HepG2 (cell line): ENCODE measurements at regions of chr7 and their contacts with region 1.

Region 1: GRCh38 chr7:18064242-18064838 is 36.7 kb upstream of the PRPS1L1 start:
- DNase-seq: peak; percentile 15
- ATAC-seq: peak; percentile 66
- H3K4me3 ChIP-seq: no peak overlapping the region
- H3K27ac ChIP-seq: no peak overlapping the region
- H3K4me1 ChIP-seq: no peaks in the 10 kb centered on the region
- H3K27me3 ChIP-seq: no peaks in the 10 kb centered on the region
- CTCF ChIP-seq: peak; percentile 52
- EP300 ChIP-seq: no peak
- POLR2A ChIP-seq: no peak
- RAD21 ChIP-seq: no peak

Region 2: DNA sequence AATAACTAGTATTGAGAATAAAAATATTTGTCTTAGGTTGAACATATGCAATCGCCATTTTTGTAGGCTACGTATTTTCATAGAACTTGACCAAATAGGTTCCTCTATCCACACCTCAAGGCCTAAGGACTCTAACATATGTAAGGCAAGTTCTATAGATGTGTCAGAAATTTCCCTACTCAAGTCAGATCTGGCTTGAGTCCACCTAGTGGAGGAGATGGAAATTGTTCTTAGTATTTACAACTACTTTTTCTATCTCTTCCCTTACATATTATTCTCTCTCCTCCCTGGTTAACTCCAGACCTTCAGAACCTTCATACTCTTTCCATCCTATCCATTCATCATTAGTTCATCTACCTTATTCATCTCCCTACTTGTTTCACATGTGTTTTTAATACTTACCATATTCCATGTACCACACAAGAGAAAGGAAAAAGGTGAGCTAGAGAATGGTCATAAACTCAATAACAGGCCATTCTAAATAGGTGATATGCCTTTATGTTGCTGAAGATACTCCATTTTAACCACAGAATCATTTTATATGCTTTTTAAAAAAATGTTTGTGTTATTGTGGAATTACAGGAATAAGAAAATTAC is 256.7 kb after region 1 on chr7:
- CTCF ChIA-PET with region 1: no interaction called
- POLR2A ChIA-PET with region 1: no interaction called
- in situ Hi-C with region 1: no loop called
- intact Hi-C with region 1: loop called (anchors 10 kb)
- DNase-seq: peak; percentile 23
- ATAC-seq: peak; percentile 68
- H3K4me3 ChIP-seq: no peak overlapping the region
- H3K27ac ChIP-seq: no peak overlapping the region
- H3K4me1 ChIP-seq: no peaks in the 10 kb centered on the region
- H3K27me3 ChIP-seq: no peaks in the 10 kb centered on the region
- CTCF ChIP-seq: peak; percentile 50
- EP300 ChIP-seq: no peak
- POLR2A ChIP-seq: no peak
- RAD21 ChIP-seq: no peak

Region 3: GRCh38 chr7:18345641-18346234 is 281.4 kb after region 1 on chr7:
- CTCF ChIA-PET with region 1: no interaction called
- POLR2A ChIA-PET with region 1: no interaction called
- in situ Hi-C with region 1: no loop called
- intact Hi-C with region 1: loop called (anchors 5 kb)
- DNase-seq: peak; percentile 35
- ATAC-seq: peak; percentile 73
- H3K4me3 ChIP-seq: no peak overlapping the region
- H3K27ac ChIP-seq: no peak overlapping the region
- H3K4me1 ChIP-seq: no peaks in the 10 kb centered on the region
- H3K27me3 ChIP-seq: no peaks in the 10 kb centered on the region
- CTCF ChIP-seq: peak; percentile 70
- EP300 ChIP-seq: no peak
- POLR2A ChIP-seq: no peak
- RAD21 ChIP-seq: peak; percentile 22; the same call in 1 of the 2 replicates